Activated CD4-positive, alpha-beta memory T cell treated with anti-CD3 and anti-CD28 coated beads, Interleukin-2, amount 10 ng/mL, durations not matched to agents 7 days and 5 days (primary cell): ENCODE measurements at regions of chr12 and their contacts with region 1.

Region 1: DNA sequence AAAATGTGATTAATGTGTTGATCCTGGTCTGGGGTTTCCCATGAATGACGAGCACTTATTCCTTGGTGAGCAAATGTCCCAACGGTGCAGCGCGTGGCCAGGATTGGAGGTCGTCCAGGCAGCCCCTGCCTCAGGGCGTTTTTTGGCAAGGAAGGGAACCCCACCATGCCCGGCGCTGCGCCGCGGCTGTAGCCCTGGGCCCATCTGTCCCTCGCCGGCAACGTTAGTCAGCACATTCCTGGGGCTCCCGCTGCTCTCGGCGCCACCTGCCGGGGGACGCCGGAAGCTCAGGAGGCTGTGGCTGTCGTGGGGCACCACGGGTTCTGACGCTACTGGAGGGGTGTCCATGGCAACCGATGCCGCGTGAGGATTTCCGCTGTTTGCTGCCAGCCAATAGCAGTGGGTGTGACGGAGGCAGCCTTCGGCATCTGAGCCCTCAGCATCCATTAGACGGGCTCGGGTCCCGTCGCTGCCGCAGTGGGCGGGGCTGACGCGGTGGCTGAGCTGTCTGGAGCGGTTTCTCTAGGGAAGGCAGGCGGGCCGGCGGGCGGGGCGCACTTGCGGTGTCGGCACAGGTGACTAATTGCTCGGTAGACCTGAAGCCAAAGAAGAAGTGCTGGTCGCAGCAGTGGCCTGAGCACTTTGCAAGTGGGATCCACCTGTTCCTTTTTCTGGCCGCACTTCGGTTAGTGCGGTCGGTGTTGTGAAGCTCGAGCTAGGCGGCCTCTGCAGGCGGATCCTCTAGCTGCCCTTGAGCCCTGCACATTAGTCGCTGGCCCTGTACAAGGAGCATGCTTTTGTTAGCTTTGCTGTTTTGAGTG is 29.5 kb downstream of the RAB35 start:
- DNase-seq: peak; percentile 100
- H3K4me3 Mint-ChIP-seq: peak overlapping the region; percentile 67
- H3K27ac Mint-ChIP-seq: peak overlapping the region; percentile 83
- H3K4me1 Mint-ChIP-seq: peaks cover 47% of the 10 kb centered on the region
- H3K27me3 Mint-ChIP-seq: no peaks in the 10 kb centered on the region

Region 2: GRCh38 chr12:119631930-119632678 is 454.9 kb before region 1 on chr12:
- CTCF ChIA-PET with region 1: no interaction called
- POLR2A ChIA-PET with region 1: no interaction called
- DNase-seq: no peak
- H3K4me3 Mint-ChIP-seq: no peak overlapping the region
- H3K27ac Mint-ChIP-seq: no peak overlapping the region
- H3K4me1 Mint-ChIP-seq: no peaks in the 10 kb centered on the region
- H3K27me3 Mint-ChIP-seq: peaks cover 30% of the 10 kb centered on the region

Region 3: DNA sequence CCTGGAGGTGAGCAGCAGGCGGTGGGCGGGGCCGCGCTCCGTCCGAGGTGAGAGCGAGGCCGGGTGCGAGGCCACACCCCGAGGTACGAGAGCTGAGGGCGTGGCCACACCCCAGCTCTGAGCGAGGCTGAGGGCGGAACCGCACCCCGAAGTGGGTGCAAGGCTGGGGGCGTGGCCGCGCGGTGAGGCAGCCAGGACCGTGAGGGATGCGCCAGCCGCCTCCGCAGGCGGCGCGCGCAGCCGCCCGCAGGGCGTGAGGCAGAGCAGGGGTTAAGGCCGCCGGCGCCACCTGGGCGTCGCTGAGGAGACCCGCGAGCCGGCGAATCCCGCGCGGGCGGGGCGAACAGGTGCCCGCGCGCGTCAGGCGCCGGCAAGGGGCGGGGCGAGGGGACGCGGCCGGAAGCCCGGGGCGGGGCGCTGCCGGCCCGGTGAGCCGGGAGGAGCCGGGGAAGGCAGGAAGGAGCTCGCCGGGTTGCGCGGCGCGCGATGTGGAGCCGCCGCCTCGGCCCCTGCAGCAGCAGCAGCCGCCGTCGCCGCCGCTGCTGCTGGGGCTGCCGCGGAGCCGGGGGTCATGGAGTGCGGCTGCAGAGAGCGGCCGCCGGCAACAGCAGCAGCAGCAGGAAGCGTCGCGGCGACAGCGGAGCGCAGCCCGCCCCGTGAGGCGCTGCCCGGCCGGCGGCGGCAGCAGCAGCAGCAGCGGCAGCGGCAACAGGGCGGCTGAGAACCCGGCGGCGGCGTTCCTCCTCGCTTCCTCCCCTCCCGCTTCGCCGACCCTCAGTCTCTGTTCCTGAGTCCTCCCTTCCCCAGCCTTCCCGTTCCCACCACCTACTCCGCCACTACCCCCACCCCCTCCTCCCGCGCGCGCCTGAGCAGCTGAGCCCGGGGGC is 98.0 kb before region 1 on chr12 and contains the start of gene BICDL1:
- CTCF ChIA-PET with region 1: interaction called, 20 read pairs
- POLR2A ChIA-PET with region 1: interaction called, 35 read pairs
- DNase-seq: peak; percentile 97
- H3K4me3 Mint-ChIP-seq: peak within 1 kb of the TSS; percentile 79
- H3K27ac Mint-ChIP-seq: peak within 1 kb of the TSS; percentile 82
- H3K4me1 Mint-ChIP-seq: peaks cover 40% of the 10 kb centered on the region
- H3K27me3 Mint-ChIP-seq: peaks cover 9% of the 10 kb centered on the region
- total RNA-seq, gene BICDL1: 44.6 to 44.7 TPM

Region 4: DNA sequence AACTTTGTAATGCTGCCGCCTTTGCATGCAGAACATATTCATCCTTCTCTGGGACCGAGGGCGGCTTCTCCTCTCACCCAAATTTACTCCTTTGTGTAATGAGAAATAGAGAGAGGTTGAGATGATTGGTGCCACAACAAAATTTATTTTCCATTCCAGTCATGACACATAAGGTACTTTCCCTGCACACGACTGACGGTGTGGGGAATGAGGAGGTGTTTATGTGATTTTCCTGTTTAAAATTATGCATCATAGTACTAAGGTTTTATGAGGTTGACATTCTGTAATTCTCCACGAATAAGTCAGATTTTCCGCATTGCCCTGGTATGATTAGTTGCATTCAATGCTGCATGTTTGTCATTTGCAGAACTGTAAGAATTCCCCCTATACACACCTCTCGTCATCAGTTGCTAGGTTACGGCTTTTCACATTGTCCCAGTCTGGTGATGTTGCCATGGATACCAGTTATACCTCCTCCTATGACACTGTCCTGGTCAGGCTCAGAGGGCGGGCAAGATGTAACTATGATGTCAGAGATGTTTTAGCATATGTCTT is 74.9 kb before region 1 on chr12:
- CTCF ChIA-PET with region 1: interaction called, 14 read pairs
- POLR2A ChIA-PET with region 1: interaction called, 16 read pairs
- DNase-seq: peak; percentile 77
- H3K4me3 Mint-ChIP-seq: peak overlapping the region; percentile 60
- H3K27ac Mint-ChIP-seq: peak overlapping the region; percentile 88
- H3K4me1 Mint-ChIP-seq: peaks cover 77% of the 10 kb centered on the region
- H3K27me3 Mint-ChIP-seq: no peaks in the 10 kb centered on the region

Region 5: DNA sequence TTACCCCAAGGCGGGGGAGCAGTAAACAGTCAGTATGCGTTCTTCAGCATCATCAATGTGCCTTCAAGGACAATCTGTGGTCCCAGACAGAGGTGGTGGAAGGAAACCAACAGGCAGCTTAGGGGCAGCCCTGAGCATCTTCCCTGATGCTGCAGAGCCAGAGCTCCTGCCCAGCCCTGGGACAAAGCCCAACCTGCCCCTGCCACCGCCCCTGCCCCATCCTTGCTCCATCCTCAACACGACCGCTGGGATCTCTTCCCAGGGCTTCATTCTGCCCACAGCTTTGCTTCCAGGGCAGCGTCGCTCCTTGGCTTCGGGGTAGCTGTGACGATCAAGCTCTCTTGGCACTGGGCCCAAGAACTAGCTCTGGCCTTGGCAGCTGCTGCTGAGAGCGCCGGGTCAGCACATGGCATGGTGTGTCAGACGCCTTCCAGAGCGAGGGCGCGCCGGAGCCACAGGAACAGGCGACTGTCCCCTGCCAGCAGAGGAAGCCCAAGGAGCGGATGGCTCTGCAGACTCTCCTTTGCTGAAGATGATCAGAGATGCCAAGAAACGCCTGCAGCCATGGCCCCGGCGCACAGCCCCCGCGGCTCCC is 13.5 kb after region 1 on chr12:
- CTCF ChIA-PET with region 1: interaction called, 11 read pairs
- POLR2A ChIA-PET with region 1: interaction called, 6 read pairs
- DNase-seq: no peak
- H3K4me3 Mint-ChIP-seq: no peak overlapping the region
- H3K27ac Mint-ChIP-seq: peak overlapping the region; percentile 2
- H3K4me1 Mint-ChIP-seq: peaks cover 31% of the 10 kb centered on the region
- H3K27me3 Mint-ChIP-seq: no peaks in the 10 kb centered on the region

Region 6: GRCh38 chr12:120181991-120182631 is 95.1 kb after region 1 on chr12:
- CTCF ChIA-PET with region 1: no interaction called
- POLR2A ChIA-PET with region 1: no interaction called
- DNase-seq: no peak
- H3K4me3 Mint-ChIP-seq: no peak overlapping the region
- H3K27ac Mint-ChIP-seq: no peak overlapping the region
- H3K4me1 Mint-ChIP-seq: peaks cover 8% of the 10 kb centered on the region
- H3K27me3 Mint-ChIP-seq: no peaks in the 10 kb centered on the region